ENCODE measurements at regions of chr19 and their contacts with region 1.

Region 1: GRCh38 chr19:52978576-52978975 is 15.9 kb upstream of the ZNF816 start:
- DNase-seq: no peak
- ATAC-seq: no peak
- H3K4me3 ChIP-seq: no peak overlapping the region
- H3K4me3 Mint-ChIP-seq: no peak overlapping the region
- H3K27ac ChIP-seq: no peak overlapping the region
- H3K27ac Mint-ChIP-seq: no peak overlapping the region
- H3K4me1 ChIP-seq: no peaks in the 10 kb centered on the region
- H3K4me1 Mint-ChIP-seq: no peaks in the 10 kb centered on the region
- H3K27me3 ChIP-seq: no peaks in the 10 kb centered on the region
- H3K27me3 Mint-ChIP-seq: no peaks in the 10 kb centered on the region
- CTCF ChIP-seq: no peak

Region 2: GRCh38 chr19:52679598-52679997 is 299.0 kb before region 1 on chr19:
- CTCF ChIA-PET with region 1: no interaction called
- POLR2A ChIA-PET with region 1: no interaction called
- intact Hi-C with region 1: loop called (anchors 2 to 5 kb)
- DNase-seq: no peak
- ATAC-seq: no peak
- H3K4me3 ChIP-seq: no peak overlapping the region
- H3K4me3 Mint-ChIP-seq: no peak overlapping the region
- H3K27ac ChIP-seq: no peak overlapping the region
- H3K27ac Mint-ChIP-seq: no peak overlapping the region
- H3K4me1 ChIP-seq: peaks cover 3% of the 10 kb centered on the region
- H3K4me1 Mint-ChIP-seq: peaks cover 19% of the 10 kb centered on the region
- H3K27me3 ChIP-seq: no peaks in the 10 kb centered on the region
- H3K27me3 Mint-ChIP-seq: no peaks in the 10 kb centered on the region
- CTCF ChIP-seq: no peak

Region 3: DNA sequence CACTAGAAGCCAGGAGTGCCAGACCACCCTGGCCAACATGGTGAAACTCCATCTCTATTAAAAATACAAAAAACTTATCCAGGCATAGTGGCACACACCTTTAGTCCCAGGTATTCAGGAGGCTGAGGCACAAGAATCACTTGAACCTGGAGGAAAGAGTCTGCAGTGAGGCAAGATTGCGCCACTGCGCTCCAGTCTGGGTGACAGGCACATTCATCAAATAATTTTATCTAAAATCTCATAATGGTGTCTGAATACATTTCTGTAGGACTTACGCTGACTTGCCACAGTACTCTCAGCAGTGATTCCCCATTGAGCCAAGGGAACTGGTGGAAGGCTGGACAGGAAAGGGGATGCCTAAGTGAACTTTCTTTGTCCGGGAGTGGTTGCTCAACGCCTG is 152.8 kb before region 1 on chr19:
- CTCF ChIA-PET with region 1: no interaction called
- POLR2A ChIA-PET with region 1: no interaction called
- intact Hi-C with region 1: no loop called
- DNase-seq: no peak
- ATAC-seq: no peak
- H3K4me3 ChIP-seq: no peak overlapping the region
- H3K4me3 Mint-ChIP-seq: no peak overlapping the region
- H3K27ac ChIP-seq: no peak overlapping the region
- H3K27ac Mint-ChIP-seq: no peak overlapping the region
- H3K4me1 ChIP-seq: peaks cover 3% of the 10 kb centered on the region
- H3K4me1 Mint-ChIP-seq: peaks cover 7% of the 10 kb centered on the region
- H3K27me3 ChIP-seq: no peaks in the 10 kb centered on the region
- H3K27me3 Mint-ChIP-seq: no peaks in the 10 kb centered on the region
- CTCF ChIP-seq: no peak

Region 4: GRCh38 chr19:53019684-53020083 is 41.1 kb after region 1 on chr19:
- CTCF ChIA-PET with region 1: no interaction called
- POLR2A ChIA-PET with region 1: no interaction called
- intact Hi-C with region 1: no loop called
- DNase-seq: peak in 4 of 14 experiments; percentile 4 to 18 (median 6)
- ATAC-seq: no peak
- H3K4me3 ChIP-seq: no peak overlapping the region
- H3K4me3 Mint-ChIP-seq: no peak overlapping the region
- H3K27ac ChIP-seq: no peak overlapping the region
- H3K27ac Mint-ChIP-seq: no peak overlapping the region
- H3K4me1 ChIP-seq: no peaks in the 10 kb centered on the region
- H3K4me1 Mint-ChIP-seq: no peaks in the 10 kb centered on the region
- H3K27me3 ChIP-seq: no peaks in the 10 kb centered on the region
- H3K27me3 Mint-ChIP-seq: no peaks in the 10 kb centered on the region
- CTCF ChIP-seq: no peak